Posterior vena cava (tissue), 2 donors: ENCODE measurements at regions of chr9 and their contacts with region 1.

Region 1: DNA sequence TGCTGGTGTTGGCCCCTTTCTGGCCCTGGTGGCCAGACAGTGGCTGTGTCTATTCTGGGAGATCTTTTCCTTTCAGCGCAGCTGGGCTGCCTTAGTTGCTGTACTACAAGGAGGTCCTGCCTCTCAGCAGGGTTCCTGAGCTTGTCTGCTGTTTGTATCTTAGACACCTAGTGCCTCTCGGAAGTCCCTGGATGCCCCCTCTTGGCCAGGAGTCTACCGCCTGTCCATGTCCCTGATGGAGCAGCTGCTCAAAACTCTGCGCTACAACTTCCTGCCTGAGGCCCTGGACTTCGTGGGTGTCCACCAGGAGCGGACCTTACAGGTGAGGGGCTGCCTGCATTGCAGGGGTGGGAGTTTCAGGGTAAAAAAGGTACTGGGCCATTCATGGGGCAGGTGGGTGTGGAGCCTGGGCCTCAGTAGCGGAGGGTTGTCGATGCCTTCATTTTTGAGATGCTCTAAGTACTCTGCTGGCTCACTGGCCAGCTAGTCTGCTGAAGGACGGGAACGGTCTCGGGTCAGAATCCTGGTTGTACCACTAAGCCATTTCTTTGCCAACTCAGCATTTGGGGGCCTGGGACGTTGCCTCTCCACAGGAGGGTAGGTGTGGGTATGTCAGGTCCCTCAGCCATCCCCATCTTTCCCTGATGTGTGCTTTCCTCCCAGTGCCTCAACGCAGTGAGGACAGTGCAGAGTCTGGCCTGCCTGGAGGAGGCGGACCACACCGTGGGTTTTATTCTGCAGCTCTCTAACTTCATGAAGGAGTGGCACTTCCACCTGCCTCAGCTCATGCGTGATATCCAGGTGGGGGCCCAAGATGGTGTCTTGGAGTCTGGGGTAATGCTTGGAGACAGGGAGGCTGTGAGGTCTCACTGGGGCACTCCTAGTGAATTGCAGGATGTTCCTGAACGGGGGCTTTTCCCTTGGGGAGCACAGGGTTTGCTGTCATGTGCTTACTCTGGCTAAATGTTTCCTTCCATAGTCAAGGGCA is 25.2 kb downstream of the SH3GLB2 start:
- DNase-seq: no peak

Region 2: DNA sequence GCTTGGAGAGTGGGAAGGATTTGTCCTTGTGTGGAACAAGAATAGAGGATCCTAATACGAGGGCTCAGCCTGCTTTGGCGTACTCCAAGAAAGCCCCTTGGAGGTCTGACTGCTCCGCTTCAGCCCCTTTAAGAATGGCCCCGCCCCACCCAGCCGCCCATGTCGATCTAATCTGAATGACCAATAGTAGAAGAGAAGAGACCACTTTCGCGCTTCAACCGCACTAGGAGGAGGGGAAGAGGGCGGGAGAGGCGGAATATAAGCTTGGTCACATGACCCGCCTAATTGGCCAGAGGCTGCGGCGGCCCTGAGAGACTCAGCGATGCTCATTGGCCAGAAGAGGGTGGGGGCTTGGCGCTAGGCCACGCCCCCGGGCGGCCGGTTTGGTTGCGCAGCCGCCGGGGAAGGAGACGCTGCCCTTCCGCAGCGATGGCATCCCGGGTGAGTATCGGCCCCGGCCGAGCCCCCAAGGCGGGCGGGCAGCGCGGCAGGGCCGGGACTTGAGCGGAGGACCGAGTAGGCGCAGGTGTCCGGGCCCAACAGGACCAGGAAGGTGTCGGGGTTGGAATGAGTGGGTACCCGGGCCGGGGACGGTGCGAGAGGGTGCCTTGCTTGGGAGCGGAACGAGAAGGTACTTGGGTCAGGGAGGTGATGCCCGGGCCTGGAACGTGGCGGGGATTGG is 33.4 kb after region 1 on chr9 and contains the start of gene MIGA2:
- intact Hi-C with region 1: loop called in 1 of 2 experiments (anchors 1 kb)
- DNase-seq: peak; percentile 99
- total RNA-seq, gene MIGA2: 14.8 to 21.1 TPM

Region 3: DNA sequence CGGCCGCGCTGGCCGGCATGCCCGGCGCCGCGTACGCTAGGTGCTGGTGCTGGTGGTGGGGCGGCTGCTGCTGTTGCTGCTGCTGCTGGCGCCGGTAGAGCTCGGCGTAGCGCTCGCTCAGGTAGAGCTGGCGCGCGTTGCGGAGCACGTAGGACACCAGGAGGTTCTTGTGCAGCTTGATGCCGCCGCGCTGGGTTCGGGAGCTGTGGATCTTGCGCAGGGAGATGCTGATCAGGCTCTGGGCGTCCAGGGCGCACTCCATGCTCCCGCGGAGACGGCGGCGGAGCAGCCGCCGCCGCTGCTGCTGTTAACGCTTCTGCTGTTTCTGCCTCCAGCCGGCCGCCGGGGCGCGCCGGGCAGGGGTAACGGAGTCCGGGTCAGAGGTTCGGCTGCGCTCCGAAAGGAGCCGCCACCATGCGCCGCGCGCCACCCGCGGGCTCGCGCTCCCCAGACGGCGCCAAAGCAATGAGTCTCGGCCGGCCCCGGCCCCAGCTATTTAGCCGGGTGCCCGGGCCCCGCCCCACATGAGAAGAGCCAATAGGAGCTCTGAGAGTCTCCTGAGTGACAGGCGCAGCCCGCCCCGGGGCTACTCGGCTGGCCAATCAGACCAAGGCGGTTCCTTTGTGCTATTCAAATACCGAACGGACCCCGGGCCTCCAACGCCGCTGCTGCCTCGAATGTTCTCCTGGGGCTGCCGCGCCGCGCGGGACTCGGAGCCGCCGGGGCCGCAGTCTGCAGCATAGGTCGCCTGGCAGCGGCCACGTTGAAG is 175.0 kb after region 1 on chr9 and contains the start of gene IER5L:
- intact Hi-C with region 1: no loop called
- DNase-seq: peak; percentile 99
- total RNA-seq, gene IER5L: 23.5 to 35.0 TPM

Region 4: GRCh38 chr9:129328377-129329028 is 325.6 kb after region 1 on chr9:
- intact Hi-C with region 1: no loop called
- DNase-seq: no peak